ENCODE measurements at regions of chr15 and their contacts with region 1.

Region 1: DNA sequence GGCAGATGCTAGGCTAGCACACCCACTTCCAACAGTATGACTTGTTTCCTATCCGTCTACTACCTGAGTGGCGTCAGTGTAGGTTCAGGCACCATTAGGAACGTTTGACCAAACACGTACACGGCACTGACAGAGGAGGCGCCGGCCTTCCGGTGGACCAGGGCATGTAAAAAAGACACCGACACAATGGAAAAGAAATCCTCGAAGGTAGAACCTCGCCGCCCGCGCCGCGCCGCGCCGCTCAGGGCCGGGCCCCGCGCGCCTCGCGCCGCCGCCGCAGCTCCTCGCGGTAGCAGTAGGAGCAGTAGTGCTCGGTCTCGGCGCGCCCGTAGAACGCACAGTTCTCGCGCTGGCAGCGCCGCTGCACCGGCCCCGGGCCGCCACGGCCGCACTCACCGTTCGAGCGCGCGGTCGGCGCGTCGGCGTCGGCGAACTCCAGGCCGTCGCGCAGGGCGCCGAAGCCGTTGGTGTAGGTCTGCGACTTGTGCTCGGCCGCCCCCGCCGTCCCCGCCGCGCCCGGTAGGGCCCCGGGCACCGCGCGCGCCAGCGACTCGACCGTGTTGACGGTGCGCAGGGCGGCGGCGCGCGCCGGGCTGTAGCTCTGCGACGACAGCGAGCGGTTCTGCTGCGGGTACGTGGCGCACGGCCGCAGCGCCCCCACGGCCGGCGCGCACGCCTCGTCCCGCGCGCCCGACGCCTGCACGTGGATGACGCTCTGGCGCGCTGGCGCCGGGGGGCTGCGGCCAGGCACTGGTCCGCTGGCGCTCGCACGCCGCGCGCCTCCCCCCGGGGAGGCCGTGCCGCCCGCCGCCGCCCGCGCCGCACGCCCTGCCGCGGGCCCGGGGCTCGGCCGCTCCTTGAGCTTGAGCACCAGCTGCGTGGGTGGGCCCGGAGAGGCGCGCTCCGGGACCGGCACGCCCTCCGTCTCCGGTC is 156.7 kb downstream of the KLF13 start:
- DNase-seq: peak; percentile 67
- H3K4me3 Mint-ChIP-seq: peak overlapping the region; percentile 89
- H3K27ac Mint-ChIP-seq: peak overlapping the region; percentile 93
- H3K4me1 Mint-ChIP-seq: peaks cover 65% of the 10 kb centered on the region
- H3K27me3 Mint-ChIP-seq: peaks cover 39% of the 10 kb centered on the region

Region 2: DNA sequence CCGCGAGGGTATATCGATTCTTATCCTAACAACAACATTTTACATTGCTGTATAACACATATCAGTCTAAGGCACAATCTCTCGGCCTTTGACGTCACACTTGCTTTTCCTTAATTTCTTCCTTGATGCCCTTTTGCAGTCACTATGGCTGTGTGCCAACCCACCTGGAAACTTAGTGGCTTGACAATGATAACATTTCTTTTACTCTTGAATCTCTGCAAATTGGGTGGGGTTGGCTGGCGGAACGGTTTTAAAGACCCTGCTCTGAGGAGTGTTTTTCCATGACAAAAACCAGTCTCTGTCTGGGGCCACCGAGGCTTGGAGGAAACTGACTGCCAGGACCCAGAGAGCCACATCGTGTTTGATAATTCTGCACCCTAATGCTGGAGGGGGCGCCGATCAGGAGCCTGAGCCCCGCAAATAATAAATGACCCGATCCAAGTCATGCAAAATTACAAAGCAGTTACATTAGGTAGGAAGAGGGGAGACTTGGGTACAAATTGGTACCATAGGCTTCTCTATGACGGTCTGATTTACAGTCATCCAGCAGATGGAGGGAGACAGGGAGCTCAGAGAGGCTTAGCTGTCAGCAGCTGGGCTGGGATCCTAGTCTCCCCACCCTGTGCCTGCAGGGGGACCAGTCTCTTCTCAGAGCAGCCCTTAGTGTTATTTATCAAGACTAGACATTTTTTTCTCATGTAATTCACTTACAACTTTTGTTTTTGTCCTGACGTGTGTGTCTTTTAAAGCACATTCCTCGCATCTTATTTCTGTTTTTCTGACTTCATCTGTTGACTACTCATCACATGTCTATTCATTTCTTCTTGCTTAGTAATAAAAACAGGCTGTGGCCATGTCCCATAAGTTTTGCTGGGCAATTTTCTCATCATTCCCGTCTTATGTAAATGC is 40.9 kb before region 1 on chr15:
- CTCF ChIA-PET with region 1: interaction called, 208 read pairs
- DNase-seq: no peak
- H3K4me3 Mint-ChIP-seq: peak overlapping the region; percentile 29
- H3K27ac Mint-ChIP-seq: peak overlapping the region; percentile 40
- H3K4me1 Mint-ChIP-seq: peaks cover 56% of the 10 kb centered on the region
- H3K27me3 Mint-ChIP-seq: no peaks in the 10 kb centered on the region

Region 3: GRCh38 chr15:31472636-31473384 is 10.5 kb before region 1 on chr15:
- CTCF ChIA-PET with region 1: interaction called, 71 read pairs
- DNase-seq: peak; percentile 86
- H3K4me3 Mint-ChIP-seq: peak overlapping the region; percentile 36
- H3K27ac Mint-ChIP-seq: peak overlapping the region; percentile 91
- H3K4me1 Mint-ChIP-seq: peaks cover 47% of the 10 kb centered on the region
- H3K27me3 Mint-ChIP-seq: peaks cover 6% of the 10 kb centered on the region

Measured in activated naive CD4-positive, alpha-beta T cell treated with anti-CD3 and anti-CD28 coated beads, Interleukin-2, amount 10 ng/mL, durations not matched to agents 7 days and 5 days (primary cell).